Activated B cell treated with CpG ODN at 0.5 μM for 24 hours (primary cell): ENCODE measurements at regions of chr2 and their contacts with region 1.

Region 1: DNA sequence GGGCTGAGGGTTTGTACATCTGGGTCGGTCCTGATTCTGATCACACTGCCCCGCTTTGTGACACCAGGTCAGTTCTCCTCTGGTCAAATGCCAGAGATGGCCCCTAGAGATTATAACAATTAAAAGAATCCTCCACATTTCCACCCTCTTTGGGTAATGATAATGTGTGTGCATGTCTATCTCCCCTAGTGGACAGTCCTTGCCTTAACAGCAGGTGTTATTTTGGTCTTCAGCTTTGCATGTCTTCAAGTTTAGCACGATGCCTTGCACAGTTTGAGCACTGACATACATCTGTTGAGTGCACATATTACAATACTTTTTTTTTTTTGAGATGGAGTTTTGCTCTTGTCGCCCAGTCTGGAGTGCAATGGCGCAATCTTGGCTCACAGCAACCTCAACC is 25.7 kb upstream of the COX7A2L start:
- DNase-seq: no peak
- ATAC-seq: no peak
- H3K4me3 Mint-ChIP-seq: no peak overlapping the region
- H3K27ac Mint-ChIP-seq: no peak overlapping the region
- H3K4me1 Mint-ChIP-seq: no peaks in the 10 kb centered on the region
- H3K27me3 Mint-ChIP-seq: peaks cover 7% of the 10 kb centered on the region
- CTCF ChIP-seq: no peak

Region 2: DNA sequence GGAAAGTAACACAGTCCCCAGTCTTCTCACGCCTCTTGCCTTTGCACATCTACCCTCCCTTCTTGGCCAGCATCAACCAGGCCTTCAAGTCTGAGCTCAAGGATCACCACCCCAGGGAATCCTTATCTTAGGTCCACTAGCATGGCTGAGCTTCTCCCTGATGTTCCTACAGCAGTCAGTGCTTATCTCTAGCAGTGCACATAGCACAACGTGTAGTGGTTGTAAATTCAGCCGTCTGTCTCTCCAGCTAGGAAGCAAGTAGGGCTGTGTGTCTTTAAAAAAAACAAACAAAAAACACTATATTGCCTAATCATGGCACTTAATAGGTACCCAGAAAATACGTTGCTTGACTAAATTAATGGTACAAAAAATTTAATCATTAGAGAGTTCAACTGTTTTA is 77.9 kb after region 1 on chr2:
- CTCF ChIA-PET with region 1: no interaction called
- POLR2A ChIA-PET with region 1: interaction called, 10 read pairs
- intact Hi-C with region 1: no loop called
- DNase-seq: no peak
- ATAC-seq: no peak
- H3K4me3 Mint-ChIP-seq: no peak overlapping the region
- H3K27ac Mint-ChIP-seq: no peak overlapping the region
- H3K4me1 Mint-ChIP-seq: no peaks in the 10 kb centered on the region
- H3K27me3 Mint-ChIP-seq: peaks cover 7% of the 10 kb centered on the region
- CTCF ChIP-seq: no peak

Region 3: GRCh38 chr2:42513257-42513918 is 126.7 kb after region 1 on chr2:
- CTCF ChIA-PET with region 1: no interaction called
- POLR2A ChIA-PET with region 1: no interaction called
- intact Hi-C with region 1: no loop called
- DNase-seq: no peak
- ATAC-seq: no peak
- H3K4me3 Mint-ChIP-seq: no peak overlapping the region
- H3K27ac Mint-ChIP-seq: peak overlapping the region; percentile 19
- H3K4me1 Mint-ChIP-seq: peaks cover 6% of the 10 kb centered on the region
- H3K27me3 Mint-ChIP-seq: peaks cover 6% of the 10 kb centered on the region
- CTCF ChIP-seq: no peak